Right ventricle myocardium inferior (tissue), 1 donor: ENCODE measurements at regions of chrX and their contacts with region 1.

Region 1: GRCh38 chrX:34826966-34827365 is 115.6 kb upstream of the FAM47B start:
- DNase-seq: no peak
- ATAC-seq: no peak

Region 2: GRCh38 chrX:35339796-35340195 is 512.8 kb after region 1 on chrX:
- intact Hi-C with region 1: loop called (anchors 10 kb)
- DNase-seq: no peak
- ATAC-seq: no peak